ENCODE measurements at regions of chr4 and their contacts with region 1.

Region 1: DNA sequence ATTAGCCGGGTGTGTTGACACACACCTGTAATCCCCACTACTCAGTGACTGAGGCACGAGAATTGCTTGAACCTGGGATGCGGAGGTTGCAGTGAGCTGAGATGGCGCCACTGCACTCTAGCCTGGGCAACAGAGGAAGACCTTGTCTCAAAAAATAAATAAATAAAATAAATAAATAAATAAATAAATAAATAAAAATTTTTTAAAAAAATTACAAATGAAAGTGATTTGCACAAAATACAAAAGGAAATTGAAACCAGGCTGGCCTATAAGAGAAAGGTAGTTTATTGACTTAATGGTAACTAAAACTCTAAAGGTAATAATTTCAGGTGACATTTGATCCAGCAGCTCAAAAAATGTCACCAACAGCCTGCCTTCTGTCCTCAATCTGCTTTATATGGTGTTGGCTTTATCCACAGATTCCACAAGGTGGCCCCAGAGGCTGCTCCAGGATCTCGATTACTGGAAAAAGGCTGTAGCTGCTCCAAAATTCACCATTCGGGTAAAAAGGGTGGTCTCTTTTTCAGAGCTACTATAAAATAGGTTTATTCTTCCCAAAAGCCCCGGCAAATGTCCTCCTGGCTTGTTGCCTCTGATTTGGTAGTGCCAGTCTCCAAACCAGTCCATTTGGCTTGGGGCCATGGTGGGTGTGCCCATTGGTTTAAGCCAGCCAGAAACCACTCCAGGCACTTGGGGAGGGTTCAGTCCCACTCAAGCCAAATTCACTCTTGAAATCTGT is 61.4 kb upstream of the TRIM2 start:
- DNase-seq: peak; percentile 75
- ATAC-seq: peak; percentile 94
- H3K4me3 Mint-ChIP-seq: no peak overlapping the region
- H3K27ac Mint-ChIP-seq: no peak overlapping the region
- H3K4me1 Mint-ChIP-seq: peaks cover 7% of the 10 kb centered on the region
- H3K27me3 Mint-ChIP-seq: peaks cover 14% of the 10 kb centered on the region
- CTCF ChIP-seq: peak; percentile 83

Region 2: DNA sequence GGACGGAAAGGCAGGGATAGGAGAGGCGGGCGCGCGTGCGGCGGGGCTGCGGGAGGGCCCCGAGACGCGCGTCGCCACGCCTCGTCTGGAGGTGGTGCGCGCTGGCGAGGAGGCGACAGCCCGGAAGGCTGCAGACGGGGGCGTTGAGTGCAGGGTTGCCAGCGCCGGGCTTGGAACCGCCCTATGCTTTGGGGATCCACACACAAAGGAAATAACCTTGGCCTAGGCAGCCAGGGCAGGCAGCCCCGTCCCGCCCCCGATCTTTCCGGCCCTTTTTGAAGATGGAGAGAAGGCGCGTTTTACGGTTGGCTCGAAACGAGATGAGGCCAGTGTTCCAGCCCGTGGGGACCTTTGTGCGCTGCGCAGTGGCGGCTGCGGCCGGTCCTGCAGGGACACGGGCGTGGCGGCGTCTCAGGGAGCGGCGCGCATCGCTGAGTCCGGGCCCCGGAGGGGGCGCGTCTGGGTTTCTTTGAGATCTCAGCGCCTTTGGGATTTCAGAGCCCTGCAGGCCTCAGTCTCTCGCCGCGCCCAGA is 10.5 kb after region 1 on chr4:
- CTCF ChIA-PET with region 1: interaction called, 12 read pairs
- POLR2A ChIA-PET with region 1: no interaction called
- intact Hi-C with region 1: no loop called
- DNase-seq: peak; percentile 87
- ATAC-seq: peak; percentile 90
- H3K4me3 Mint-ChIP-seq: peak overlapping the region; percentile 72
- H3K27ac Mint-ChIP-seq: peak overlapping the region; percentile 66
- H3K4me1 Mint-ChIP-seq: peaks cover 40% of the 10 kb centered on the region
- H3K27me3 Mint-ChIP-seq: peaks cover 24% of the 10 kb centered on the region
- CTCF ChIP-seq: no peak

Region 3: GRCh38 chr4:153159728-153160221 is 16.9 kb after region 1 on chr4:
- CTCF ChIA-PET with region 1: interaction called, 15 read pairs
- POLR2A ChIA-PET with region 1: no interaction called
- intact Hi-C with region 1: no loop called
- DNase-seq: no peak
- ATAC-seq: peak; percentile 60
- H3K4me3 Mint-ChIP-seq: no peak overlapping the region
- H3K27ac Mint-ChIP-seq: peak overlapping the region; percentile 53
- H3K4me1 Mint-ChIP-seq: peaks cover 37% of the 10 kb centered on the region
- H3K27me3 Mint-ChIP-seq: peaks cover 18% of the 10 kb centered on the region
- CTCF ChIP-seq: no peak

Region 4: DNA sequence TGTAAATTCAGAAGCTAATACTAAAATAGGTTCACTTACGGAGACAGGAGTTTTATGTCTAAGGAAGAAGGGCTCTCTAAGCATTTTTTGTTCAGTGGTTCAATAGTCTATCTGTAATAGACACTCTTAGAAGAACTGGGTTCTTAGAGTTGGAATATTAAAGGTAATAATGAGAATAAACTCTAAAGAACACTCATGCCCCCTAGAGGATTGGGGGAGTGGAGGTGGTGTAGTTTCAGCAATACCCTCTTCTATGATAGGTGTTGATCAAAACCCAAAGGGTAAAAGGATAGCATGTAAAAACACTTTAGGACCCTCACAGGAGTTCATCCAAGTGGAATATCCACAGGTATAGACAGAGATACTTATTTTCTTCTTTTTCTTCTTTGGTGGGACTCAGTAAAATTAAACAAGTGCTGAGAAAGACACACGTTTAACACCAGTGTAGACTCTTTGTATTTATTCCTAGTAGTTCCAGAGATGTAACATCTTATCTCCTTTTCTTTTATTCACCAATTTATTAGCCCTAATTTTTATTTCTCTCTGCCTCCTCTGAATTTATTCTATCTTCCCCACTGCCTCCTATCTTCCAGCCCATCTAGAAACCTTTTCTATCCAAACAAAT is 175.9 kb after region 1 on chr4:
- CTCF ChIA-PET with region 1: interaction called, 27 read pairs
- POLR2A ChIA-PET with region 1: no interaction called
- intact Hi-C with region 1: loop called (anchors 2 kb)
- DNase-seq: peak; percentile 43
- ATAC-seq: peak; percentile 56
- H3K4me3 Mint-ChIP-seq: no peak overlapping the region
- H3K27ac Mint-ChIP-seq: no peak overlapping the region
- H3K4me1 Mint-ChIP-seq: no peaks in the 10 kb centered on the region
- H3K27me3 Mint-ChIP-seq: no peaks in the 10 kb centered on the region
- CTCF ChIP-seq: peak; percentile 82

Region 5: DNA sequence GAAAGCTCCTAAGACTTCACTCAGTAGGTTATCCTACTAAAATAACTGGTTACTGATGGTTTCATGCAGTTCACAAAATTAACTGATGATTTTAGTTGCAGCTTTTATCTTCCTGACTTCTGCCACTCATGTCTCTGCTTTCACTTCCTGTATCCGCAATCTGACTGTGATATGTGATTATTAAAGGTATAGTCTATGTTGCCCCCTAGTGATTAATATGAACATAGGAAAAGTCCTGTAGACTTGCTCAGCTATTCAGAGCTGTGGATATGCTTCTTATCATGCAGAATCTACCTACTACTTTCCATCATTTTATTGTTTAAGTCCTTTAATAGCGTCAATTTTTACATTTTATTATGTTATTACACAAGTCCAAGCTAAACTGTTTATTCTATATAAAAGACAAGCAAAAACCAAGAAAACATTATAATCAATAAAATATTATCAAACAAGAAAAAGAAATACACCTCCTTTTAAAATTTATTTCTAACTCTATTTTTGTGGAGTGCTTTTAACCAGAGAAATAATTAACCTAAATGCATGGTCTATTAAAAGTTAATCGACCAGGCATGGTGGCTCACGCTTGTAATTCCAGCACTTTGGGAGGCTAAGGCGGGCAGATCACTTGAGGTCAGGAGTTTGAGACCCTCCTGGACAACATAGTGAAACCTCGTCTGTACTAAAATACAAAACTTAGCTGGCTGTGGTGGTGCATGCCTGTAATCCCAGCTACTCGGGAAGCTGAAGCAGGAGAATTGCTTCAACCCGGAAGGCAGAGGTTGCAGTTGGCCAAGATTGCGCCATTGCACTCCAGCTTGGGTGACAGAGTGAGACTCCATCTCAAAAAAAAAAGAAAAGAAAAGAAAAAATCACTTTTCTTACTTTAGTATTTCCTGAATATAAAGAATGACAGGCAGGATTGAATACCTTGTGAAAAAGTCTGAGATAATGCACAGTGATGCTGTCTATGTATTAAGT is 500.8 kb after region 1 on chr4:
- CTCF ChIA-PET with region 1: interaction called, 9 read pairs
- POLR2A ChIA-PET with region 1: no interaction called
- intact Hi-C with region 1: loop called (anchors 10 kb)
- DNase-seq: no peak
- ATAC-seq: peak; percentile 94
- H3K4me3 Mint-ChIP-seq: no peak overlapping the region
- H3K27ac Mint-ChIP-seq: peak overlapping the region; percentile 13
- H3K4me1 Mint-ChIP-seq: peaks cover 9% of the 10 kb centered on the region
- H3K27me3 Mint-ChIP-seq: no peaks in the 10 kb centered on the region
- CTCF ChIP-seq: peak; percentile 73